Ascending aorta (tissue), 2 donors: ENCODE measurements at regions of chr2 and their contacts with region 1.

Region 1: GRCh38 chr2:69893684-69894551 is at the start of gene SNRNP27:
- DNase-seq: peak in 1 of 2 donors; percentile 85
- H3K4me3 ChIP-seq: peak within 1 kb of the TSS; percentile 77
- H3K27ac ChIP-seq: peak within 1 kb of the TSS; percentile 82 to 88
- H3K4me1 ChIP-seq: peaks cover 6 to 12% of the 10 kb centered on the region in 2 donors
- H3K27me3 ChIP-seq: no peaks in the 10 kb centered on the region
- CTCF ChIP-seq: no peak
- total RNA-seq, gene SNRNP27: 157 TPM

Region 2: DNA sequence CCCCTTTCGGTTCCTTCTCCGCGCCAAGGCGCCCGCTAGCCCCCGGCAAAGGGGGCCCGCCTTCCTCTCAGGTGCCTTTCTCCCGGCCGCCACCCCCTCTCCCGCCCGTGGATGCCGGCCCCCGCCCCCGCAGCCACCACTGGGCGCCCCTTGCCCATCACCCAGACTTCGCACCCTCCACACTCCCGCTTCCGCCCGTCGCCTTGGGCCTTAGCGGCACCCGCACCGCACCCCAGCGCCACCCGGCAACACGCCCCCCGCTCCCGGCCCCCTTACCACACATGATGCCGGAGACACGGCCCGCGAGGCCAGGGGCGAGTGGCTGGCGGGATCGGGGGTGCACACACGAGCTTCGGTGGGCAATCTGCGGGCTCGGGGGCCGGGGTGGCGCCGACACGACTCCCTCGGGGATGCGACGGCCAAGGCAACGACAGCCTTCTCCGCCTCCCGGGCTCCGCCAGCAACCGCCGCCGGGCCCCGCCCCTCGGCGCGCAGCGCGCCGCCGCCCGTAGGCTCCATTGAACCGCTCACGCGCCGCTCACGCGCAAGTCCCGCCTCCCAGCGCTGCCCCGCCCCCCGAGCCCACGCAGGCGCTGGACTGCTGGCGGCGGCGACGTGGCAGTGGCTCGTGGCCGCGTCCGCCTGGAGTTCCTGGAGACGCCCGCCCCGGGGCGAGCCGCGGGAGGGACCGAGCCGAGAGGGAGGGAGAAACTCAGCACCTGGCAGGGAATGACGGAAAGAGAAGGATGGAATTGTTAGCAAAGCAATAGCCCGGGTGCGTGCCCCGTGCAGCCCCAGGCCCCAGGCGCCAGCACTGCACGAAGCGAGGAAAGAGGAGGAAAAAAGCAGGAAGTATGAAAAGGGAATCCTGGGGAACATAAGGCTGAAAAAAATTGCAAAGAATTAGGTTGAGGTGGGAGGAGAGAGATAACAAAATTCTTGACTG is 506.9 kb before region 1 on chr2 and contains the start of gene GFPT1:
- intact Hi-C with region 1: loop called (anchors 1 kb)
- DNase-seq: peak; percentile 79 to 97
- H3K4me3 ChIP-seq: peak within 1 kb of the TSS; percentile 82 to 87
- H3K27ac ChIP-seq: peak within 1 kb of the TSS; percentile 89 to 90
- H3K4me1 ChIP-seq: peaks cover 3 to 4% of the 10 kb centered on the region in 2 donors
- H3K27me3 ChIP-seq: no peaks in the 10 kb centered on the region
- CTCF ChIP-seq: no peak
- total RNA-seq, gene GFPT1: 25.7 TPM

Region 3: GRCh38 chr2:69499242-69499641 is 394.7 kb before region 1 on chr2:
- intact Hi-C with region 1: no loop called
- DNase-seq: no peak
- H3K4me3 ChIP-seq: no peak overlapping the region
- H3K27ac ChIP-seq: no peak overlapping the region
- H3K4me1 ChIP-seq: no peaks in the 10 kb centered on the region
- H3K27me3 ChIP-seq: no peaks in the 10 kb centered on the region
- CTCF ChIP-seq: no peak

Region 4: GRCh38 chr2:69643602-69644505 is 250.1 kb before region 1 on chr2 and contains the start of gene AAK1:
- intact Hi-C with region 1: no loop called
- DNase-seq: peak; percentile 50 to 95
- H3K4me3 ChIP-seq: peak within 1 kb of the TSS; percentile 89 to 97
- H3K27ac ChIP-seq: peak within 1 kb of the TSS; percentile 95
- H3K4me1 ChIP-seq: peaks cover 9 to 26% of the 10 kb centered on the region in 2 donors
- H3K27me3 ChIP-seq: no peaks in the 10 kb centered on the region
- CTCF ChIP-seq: peak in 1 of 3 experiments; percentile 25
- total RNA-seq, gene AAK1: 53.4 TPM

Region 5: DNA sequence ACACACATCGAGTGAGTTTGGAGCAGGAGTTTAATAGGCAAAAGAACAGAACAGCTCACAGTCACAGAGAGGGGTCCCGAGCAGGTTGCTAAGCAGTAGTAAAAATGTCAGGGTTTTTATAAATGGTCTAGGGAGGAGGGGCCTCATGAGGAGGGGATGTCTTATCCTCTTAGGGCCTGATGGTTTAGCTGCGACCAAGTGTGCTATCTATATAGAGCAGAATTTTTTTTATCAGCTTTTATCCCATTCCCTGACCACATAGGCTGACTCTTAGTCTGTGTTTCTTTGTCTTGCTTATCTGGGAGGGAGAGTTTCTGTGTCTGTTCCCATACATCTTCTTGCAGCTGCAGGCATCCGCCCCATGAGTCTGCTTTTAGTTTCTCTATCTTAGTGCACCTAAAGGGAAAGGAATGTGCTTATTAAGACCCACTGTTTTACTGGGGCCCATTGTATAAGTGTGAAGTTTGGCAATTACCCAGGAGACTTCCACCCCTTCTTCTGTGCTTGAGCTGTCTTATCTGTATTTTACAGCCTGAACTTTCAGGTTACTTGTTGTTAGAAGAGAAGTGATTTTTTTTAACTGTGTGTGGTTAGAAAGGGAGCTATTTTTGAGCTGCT is 94.9 kb before region 1 on chr2:
- intact Hi-C with region 1: no loop called
- DNase-seq: no peak
- H3K4me3 ChIP-seq: peak overlapping the region; percentile 49 to 64
- H3K27ac ChIP-seq: peak overlapping the region; percentile 84 to 85
- H3K4me1 ChIP-seq: peaks cover 0 to 13% of the 10 kb centered on the region in 2 donors
- H3K27me3 ChIP-seq: no peaks in the 10 kb centered on the region
- CTCF ChIP-seq: no peak

Region 6: GRCh38 chr2:69829256-69830046 is 64.5 kb before region 1 on chr2 and contains the start of gene GMCL1:
- intact Hi-C with region 1: loop called (anchors 5 kb)
- DNase-seq: peak; percentile 86 to 98
- H3K4me3 ChIP-seq: peak within 1 kb of the TSS; percentile 90 to 91
- H3K27ac ChIP-seq: peak within 1 kb of the TSS; percentile 91 to 94
- H3K4me1 ChIP-seq: peaks cover 0 to 23% of the 10 kb centered on the region in 2 donors
- H3K27me3 ChIP-seq: no peaks in the 10 kb centered on the region
- CTCF ChIP-seq: peak in 1 of 3 experiments; percentile 10
- total RNA-seq, gene GMCL1: 10.4 TPM